SK-N-SH (cell line): ENCODE measurements at regions of chr13 and their contacts with region 1.

Region 1: DNA sequence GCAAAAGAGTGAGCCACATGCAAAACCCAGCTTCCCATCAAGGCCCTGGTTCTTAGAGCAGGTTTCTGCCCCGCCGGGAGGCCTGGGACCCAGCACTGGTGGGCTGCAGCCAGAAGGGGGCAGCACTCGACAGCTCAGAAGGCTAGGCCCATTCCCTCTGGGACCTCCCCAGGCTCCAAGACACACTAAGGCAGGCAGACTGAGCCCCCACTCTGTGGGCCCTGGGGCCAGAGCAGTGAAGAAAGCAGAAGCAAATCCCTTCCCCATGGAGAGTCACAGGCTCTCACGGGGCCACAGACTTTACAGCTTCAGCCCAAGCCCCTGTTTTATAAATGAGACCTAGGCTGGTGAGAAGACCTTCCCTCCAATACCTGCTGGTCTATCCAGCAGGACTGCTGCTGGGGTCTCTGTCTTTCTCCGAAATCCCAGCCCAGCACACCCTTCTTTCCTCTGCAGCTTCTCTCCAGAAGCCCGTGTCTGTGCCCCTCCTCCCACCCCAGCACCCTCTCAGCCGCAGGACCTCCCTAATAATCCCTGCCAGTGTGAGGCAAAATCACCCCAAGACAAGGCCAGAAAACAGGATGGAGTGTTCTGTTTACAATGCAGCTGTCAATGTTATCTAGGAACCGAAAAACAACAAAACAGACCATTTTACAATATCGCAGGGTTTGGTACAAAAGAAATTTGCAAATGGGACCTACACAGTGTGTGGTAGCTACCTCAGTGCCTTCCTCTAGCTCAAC is 109.3 kb downstream of the ABCC4 start:
- DNase-seq: peak; percentile 77
- H3K4me3 ChIP-seq: no peak overlapping the region; a peak in 1 of 4 replicates
- H3K27ac ChIP-seq: no peak overlapping the region
- H3K4me1 ChIP-seq: no peaks in the 10 kb centered on the region; a peak in 1 of 4 replicates
- H3K27me3 ChIP-seq: no peaks in the 10 kb centered on the region
- CTCF ChIP-seq: peak; percentile 97
- EP300 ChIP-seq: no peak
- RAD21 ChIP-seq: peak; percentile 91

Region 2: DNA sequence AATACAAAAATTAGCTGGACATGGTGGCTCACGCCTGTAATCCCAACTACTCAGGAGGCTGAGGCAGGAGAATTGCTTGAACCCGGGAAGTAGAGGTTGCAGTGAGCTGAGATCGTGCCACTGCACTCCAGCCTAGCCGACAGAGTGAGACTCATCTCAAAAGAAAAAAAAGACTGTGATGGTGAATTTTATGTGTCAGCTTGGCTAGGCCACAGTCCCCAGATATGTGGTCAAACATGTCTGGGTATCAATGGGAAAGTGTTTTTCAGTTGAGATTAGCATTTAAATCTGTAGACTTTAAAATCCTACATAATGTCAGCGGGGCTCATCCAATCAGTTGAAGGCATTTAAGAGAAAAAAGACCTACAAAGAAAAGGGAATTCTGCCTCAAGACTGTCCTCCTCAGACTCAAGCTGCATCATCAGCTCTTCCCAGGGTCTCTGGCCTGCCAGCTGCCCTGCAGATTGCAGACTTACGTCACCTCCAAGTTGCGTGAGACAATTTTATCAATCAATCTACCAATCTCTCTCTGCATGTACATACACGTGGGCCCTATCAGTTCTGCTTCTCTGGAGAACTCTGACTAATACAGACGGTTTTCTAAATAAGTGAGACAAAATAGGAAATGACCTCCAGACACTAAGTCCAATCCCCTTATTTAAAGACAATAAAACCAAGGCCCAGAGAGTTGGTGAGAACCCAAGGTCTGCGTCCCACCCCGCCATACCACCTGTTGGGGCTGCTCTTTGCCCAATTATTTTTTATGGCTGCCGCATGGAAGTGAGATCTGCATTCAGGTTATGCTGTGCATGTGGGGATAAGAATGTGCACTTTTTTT is 10.0 kb after region 1 on chr13:
- CTCF ChIA-PET with region 1: interaction called, 33 read pairs
- POLR2A ChIA-PET with region 1: no interaction called
- DNase-seq: peak; percentile 14
- H3K4me3 ChIP-seq: no peak overlapping the region
- H3K27ac ChIP-seq: no peak overlapping the region
- H3K4me1 ChIP-seq: peaks cover 0 to 6% of the 10 kb centered on the region in 2 experiments; a peak in 1 of 4 replicates
- H3K27me3 ChIP-seq: no peaks in the 10 kb centered on the region
- CTCF ChIP-seq: no peak
- EP300 ChIP-seq: no peak
- RAD21 ChIP-seq: peak; percentile 9; the same call in 1 of the 2 replicates

Region 3: GRCh38 chr13:95279016-95279415 is 87.0 kb after region 1 on chr13:
- CTCF ChIA-PET with region 1: interaction called, 11 read pairs
- POLR2A ChIA-PET with region 1: no interaction called
- DNase-seq: no peak
- H3K4me3 ChIP-seq: no peak overlapping the region
- H3K27ac ChIP-seq: no peak overlapping the region
- H3K4me1 ChIP-seq: peaks cover 2 to 6% of the 10 kb centered on the region in 2 experiments; a peak in 2 of 4 replicates
- H3K27me3 ChIP-seq: no peaks in the 10 kb centered on the region
- CTCF ChIP-seq: no peak
- EP300 ChIP-seq: no peak
- RAD21 ChIP-seq: no peak

Region 4: GRCh38 chr13:95367309-95367843 is 175.4 kb after region 1 on chr13:
- CTCF ChIA-PET with region 1: interaction called, 24 read pairs
- POLR2A ChIA-PET with region 1: no interaction called
- DNase-seq: peak; percentile 34
- H3K4me3 ChIP-seq: no peak overlapping the region
- H3K27ac ChIP-seq: peak overlapping the region in 1 of 2 experiments; percentile 4; a peak in 1 of 4 replicates
- H3K4me1 ChIP-seq: peaks cover 0 to 6% of the 10 kb centered on the region in 2 experiments; a peak in 2 of 4 replicates
- H3K27me3 ChIP-seq: no peaks in the 10 kb centered on the region
- CTCF ChIP-seq: no peak
- EP300 ChIP-seq: peak in 1 of 2 experiments; percentile 63; a peak in 1 of 4 replicates
- RAD21 ChIP-seq: no peak

Region 5: GRCh38 chr13:95420501-95420900 is 228.5 kb after region 1 on chr13:
- CTCF ChIA-PET with region 1: interaction called, 11 read pairs
- POLR2A ChIA-PET with region 1: no interaction called
- DNase-seq: no peak
- H3K4me3 ChIP-seq: no peak overlapping the region
- H3K27ac ChIP-seq: no peak overlapping the region
- H3K4me1 ChIP-seq: no peaks in the 10 kb centered on the region; a peak in 1 of 4 replicates
- H3K27me3 ChIP-seq: no peaks in the 10 kb centered on the region; the same call in 1 of the 2 replicates
- CTCF ChIP-seq: no peak
- EP300 ChIP-seq: no peak
- RAD21 ChIP-seq: no peak

Region 6: DNA sequence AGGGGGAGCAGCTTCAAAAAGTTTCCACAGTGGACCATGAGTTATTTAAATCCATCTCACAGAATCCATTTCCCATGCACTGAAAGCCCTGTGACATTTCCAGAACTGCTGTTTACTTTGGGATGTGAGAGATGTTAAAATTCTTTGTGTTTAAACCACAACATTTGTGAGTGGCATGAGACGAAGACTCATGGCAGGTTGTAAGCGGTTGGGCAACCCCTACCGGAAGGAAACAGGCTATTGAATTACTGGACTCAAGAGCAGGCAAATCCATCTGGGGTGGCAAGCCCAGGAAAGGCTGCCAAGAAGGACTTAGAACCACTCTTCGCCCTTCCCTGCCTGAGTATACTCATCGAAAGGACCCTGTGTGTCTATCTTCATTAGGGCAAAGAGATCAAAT is 338.2 kb after region 1 on chr13:
- CTCF ChIA-PET with region 1: no interaction called
- POLR2A ChIA-PET with region 1: no interaction called
- DNase-seq: no peak
- H3K4me3 ChIP-seq: no peak overlapping the region
- H3K27ac ChIP-seq: no peak overlapping the region
- H3K4me1 ChIP-seq: 0 out of 4 replicates have a peak, but pooled peaks cover 0 to 10% of the 10 kb centered on the region in 2 experiments
- H3K27me3 ChIP-seq: no peaks in the 10 kb centered on the region
- CTCF ChIP-seq: no peak
- EP300 ChIP-seq: no peak
- RAD21 ChIP-seq: no peak